ENCODE measurements at regions of chr19 and their contacts with region 1.

Region 1: DNA sequence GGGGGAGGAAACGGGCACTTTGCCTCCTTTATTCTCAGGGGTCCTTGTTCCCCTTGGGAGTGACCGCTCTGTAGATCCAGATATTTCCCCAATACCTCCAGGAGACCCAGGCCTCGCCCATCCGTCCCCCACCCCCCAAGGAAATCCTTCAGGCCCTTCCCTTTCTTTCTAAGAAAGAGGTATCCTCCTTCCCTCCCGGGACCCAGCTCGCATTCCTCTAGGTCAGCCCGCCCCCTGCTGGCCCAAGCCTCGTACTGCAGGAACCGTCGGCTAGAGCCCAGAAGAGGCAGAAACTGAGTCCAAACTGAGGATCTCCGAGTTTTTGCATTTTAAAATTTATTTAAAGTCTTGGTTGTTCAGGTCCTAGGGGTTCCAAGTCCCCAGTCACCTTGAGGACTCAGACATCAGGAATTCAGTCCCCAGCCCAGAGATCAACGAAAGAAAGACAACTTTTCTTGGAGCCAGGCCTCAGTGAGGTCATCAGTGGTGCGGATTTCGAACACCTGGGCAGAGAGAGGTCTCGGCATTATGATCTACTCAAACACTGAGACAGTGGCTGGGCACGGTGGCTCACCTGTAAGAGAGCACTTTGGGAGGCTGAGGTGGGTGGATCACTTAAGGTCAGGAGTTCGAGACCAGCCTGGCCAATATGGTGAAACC is 7.5 kb upstream of the LRFN1 start:
- DNase-seq: peak; percentile 71 to 98 (median 93)

Region 2: DNA sequence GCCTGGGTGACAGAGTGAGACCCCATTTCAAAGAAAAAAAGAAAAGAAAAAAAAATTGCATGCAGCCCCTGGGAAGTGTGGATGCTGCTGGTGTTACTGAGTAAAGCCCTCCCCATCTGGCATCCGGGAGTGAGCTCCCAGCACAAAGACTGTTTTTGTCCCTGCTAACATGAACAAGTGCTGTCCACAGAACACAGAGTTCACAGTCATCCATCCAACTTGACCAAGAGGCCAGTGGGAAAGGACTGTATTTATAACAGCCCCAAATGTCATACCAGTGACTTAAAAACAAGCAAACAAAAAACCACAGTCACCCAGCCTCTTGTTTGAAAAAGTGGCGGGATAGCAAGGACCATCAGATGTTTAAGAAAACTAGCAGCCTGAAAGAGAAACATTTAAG is 363.4 kb before region 1 on chr19:
- intact Hi-C with region 1: loop called (anchors 5 kb)
- DNase-seq: peak in 3 of 42 donors; percentile 5 to 25 (median 17)

Region 3: DNA sequence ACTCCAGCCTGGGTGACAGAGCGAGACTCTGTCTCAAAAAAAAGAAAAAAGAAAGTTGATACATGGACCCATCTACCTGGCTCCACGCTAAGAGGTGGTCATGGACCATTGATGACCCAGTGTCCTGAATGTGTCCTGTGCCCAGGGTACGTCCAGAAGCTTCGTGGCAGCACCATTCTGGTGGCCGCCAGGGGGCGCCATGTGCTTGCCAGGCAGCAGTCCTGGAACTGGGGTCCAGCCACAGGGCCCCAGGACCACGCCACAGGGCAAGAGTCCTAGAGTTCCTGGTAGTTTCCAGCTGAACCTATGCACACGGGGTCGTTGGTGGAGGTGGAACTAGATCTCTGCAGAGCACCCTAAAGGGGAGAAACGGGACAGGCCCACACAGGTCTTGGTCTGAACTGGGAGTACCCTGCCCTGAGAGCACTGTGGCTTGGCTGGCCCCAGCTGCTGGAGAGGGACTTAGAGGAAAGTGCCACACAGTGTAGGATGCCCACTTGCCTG is 275.9 kb before region 1 on chr19:
- intact Hi-C with region 1: loop called (anchors 5 kb)
- DNase-seq: peak; percentile 45 to 95 (median 86)

Region 4: GRCh38 chr19:39124136-39124764 is 203.9 kb before region 1 on chr19:
- intact Hi-C with region 1: loop called (anchors 5 kb)
- DNase-seq: no peak

Measured in head of caudate nucleus (tissue), 42 donors.